ENCODE measurements at regions of chr12 and their contacts with region 1.

Region 1: DNA sequence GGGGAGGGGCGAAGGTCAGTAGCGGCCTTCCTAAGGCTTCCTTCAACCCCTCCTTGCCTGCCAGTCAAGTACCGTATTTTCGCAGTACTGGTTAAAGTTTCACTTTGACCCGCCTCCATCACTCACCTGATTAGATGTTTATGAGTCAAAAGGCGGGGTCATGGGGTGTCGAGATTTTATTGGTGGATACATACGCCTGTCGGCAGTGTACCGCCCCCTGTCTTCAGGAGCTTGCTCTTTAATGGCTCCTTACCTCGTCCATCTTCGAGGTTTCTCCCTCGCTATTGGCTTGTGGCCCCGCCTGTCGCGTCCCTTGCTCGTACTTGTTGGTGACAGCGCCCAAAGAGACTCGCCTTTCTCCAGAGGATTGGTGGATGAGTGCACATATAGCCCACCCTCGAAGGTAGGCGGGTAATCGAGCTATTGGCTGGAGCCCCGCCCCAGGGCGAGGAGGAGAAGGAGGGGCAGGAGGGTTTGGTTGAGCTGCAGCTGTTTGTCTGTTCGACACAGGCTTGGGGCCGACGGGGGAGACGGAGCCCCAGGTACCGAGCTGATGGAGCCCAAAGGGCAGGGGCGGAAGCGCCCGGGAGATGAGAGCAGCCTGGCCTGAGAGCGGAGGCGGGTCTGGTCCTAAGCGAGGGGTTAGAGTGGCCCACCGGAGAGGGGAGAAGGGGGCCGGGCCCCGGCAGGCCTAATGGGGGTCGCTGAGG is at the start of gene RAB5B:
- DNase-seq: peak; percentile 81 to 100 (median 98)
- ATAC-seq: peak; percentile 92
- H3K4me3 ChIP-seq: peak within 1 kb of the TSS; percentile 84
- H3K4me3 Mint-ChIP-seq: no peak within 1 kb of the TSS
- H3K27ac ChIP-seq: peak within 1 kb of the TSS; percentile 88
- H3K27ac Mint-ChIP-seq: no peak within 1 kb of the TSS
- H3K4me1 ChIP-seq: peaks cover 8 to 19% of the 10 kb centered on the region in 2 donors
- H3K4me1 Mint-ChIP-seq: peaks cover 18 to 31% (median 26%) of the 10 kb centered on the region in 7 donors
- H3K27me3 ChIP-seq: no peaks in the 10 kb centered on the region
- H3K27me3 Mint-ChIP-seq: no peaks in the 10 kb centered on the region
- total RNA-seq, gene RAB5B: 45.2 to 109 (median 62.7) TPM

Region 2: GRCh38 chr12:55940065-55940732 is 33.6 kb before region 1 on chr12:
- CTCF ChIA-PET with region 1: interaction called, 7 read pairs
- POLR2A ChIA-PET with region 1: interaction called, 20 read pairs
- intact Hi-C with region 1: no loop called
- DNase-seq: peak; percentile 62 to 88 (median 82)
- ATAC-seq: peak; percentile 98
- H3K4me3 ChIP-seq: no peak overlapping the region
- H3K4me3 Mint-ChIP-seq: peak overlapping the region; percentile 57 to 99 (median 72)
- H3K27ac ChIP-seq: peak overlapping the region; percentile 64
- H3K27ac Mint-ChIP-seq: peak overlapping the region; percentile 55 to 100 (median 97)
- H3K4me1 ChIP-seq: peaks cover 16 to 63% of the 10 kb centered on the region in 2 donors
- H3K4me1 Mint-ChIP-seq: peaks cover 65 to 98% (median 93%) of the 10 kb centered on the region in 7 donors
- H3K27me3 ChIP-seq: no peaks in the 10 kb centered on the region
- H3K27me3 Mint-ChIP-seq: no peaks in the 10 kb centered on the region

Region 3: DNA sequence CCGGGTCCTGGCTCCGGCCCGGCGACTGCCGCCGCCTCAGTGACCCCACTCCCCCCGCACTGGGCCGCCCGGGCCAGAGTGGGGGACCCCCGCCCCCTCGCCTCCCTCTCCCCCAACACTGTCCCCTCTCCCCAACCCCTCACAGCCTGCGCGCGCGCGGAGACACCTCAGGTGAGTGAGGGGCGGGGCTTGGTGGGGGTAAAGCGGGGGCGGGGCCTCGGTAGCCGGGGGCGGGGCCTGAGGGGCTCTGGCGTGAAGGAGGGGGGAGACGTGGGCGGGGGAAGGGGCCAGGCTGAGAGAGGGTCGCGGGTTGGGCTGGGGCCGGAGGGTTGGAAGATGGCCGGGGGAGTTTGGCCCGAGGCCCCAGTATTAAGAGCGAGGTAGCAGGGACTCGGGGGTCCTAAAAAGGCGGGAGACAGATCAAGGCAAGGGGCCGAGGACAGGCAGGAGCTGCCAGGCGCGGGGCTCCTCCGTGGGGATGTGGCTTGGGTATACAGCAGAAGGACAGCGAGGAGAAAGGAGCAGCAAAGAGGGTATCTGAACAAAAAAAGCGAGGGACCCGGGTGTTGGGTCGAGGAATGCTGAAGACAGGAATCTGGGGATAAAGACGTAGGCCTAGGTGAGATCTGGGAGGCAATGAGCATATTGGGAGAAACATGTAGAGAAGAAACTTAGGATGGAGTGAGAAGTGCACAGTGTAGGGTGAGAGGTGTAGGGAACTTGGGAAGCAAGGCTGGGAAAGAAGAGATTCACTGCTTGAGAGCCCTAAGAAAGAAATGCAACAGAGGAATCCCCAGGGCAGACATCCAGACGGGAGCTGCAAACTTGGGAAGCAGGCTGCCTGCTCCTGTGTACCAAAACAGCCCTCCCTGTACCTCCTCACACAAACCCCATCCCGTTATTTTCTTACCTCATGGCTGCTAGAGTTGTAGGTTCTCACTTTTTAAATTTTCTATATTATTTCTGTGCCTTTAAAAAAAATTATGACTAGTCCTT is 34.1 kb after region 1 on chr12:
- CTCF ChIA-PET with region 1: no interaction called
- POLR2A ChIA-PET with region 1: interaction called, 5 read pairs
- intact Hi-C with region 1: loop called in 1 of 2 experiments (anchors 1 kb)
- DNase-seq: peak; percentile 38 to 72 (median 63)
- ATAC-seq: peak; percentile 91
- H3K4me3 ChIP-seq: peak overlapping the region; percentile 57
- H3K4me3 Mint-ChIP-seq: peak overlapping the region; percentile 80 to 94 (median 88)
- H3K27ac ChIP-seq: peak overlapping the region; percentile 69
- H3K27ac Mint-ChIP-seq: peak overlapping the region; percentile 20 to 92 (median 84)
- H3K4me1 ChIP-seq: peaks cover 10% of the 10 kb centered on the region in 2 donors
- H3K4me1 Mint-ChIP-seq: peaks cover 16 to 35% (median 29%) of the 10 kb centered on the region in 7 donors
- H3K27me3 ChIP-seq: no peaks in the 10 kb centered on the region
- H3K27me3 Mint-ChIP-seq: no peaks in the 10 kb centered on the region

Region 4: DNA sequence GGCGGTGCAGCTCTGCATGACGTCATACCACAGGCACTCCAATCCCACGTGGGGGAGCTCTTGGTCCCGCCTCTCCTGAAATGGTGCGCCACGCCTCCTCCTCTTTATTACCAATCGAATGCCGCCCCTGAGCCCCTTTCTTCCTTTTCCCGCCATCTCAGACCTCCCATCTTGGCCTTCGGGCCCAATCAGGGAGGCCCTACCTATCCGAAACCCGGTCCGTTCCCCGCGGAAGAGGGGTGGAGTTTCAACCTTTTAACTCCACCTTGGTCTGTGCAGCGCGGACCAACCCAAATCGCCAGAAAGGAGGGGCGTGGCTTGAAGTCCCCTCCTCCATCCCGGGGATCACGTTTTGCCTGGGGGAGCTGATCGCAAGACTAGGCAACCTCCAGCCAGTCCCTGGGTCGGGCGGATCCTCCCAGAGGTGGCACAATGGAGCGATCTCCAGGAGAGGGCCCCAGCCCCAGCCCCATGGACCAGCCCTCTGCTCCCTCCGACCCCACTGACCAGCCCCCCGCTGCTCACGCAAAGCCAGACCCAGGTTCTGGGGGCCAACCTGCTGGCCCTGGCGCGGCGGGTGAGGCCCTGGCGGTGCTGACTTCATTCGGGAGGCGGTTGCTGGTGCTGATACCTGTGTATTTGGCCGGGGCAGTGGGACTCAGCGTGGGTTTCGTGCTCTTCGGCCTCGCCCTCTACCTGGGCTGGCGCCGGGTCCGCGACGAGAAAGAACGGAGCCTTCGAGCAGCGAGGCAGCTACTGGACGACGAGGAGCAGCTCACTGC is 154.3 kb after region 1 on chr12 and contains the start of gene ESYT1:
- CTCF ChIA-PET with region 1: no interaction called
- POLR2A ChIA-PET with region 1: interaction called, 5 read pairs
- intact Hi-C with region 1: loop called in 1 of 2 experiments (anchors 1 kb)
- DNase-seq: peak; percentile 75 to 100 (median 98)
- ATAC-seq: peak; percentile 94
- H3K4me3 ChIP-seq: peak within 1 kb of the TSS; percentile 77
- H3K4me3 Mint-ChIP-seq: peak within 1 kb of the TSS; percentile 95 to 100 (median 98)
- H3K27ac ChIP-seq: peak within 1 kb of the TSS; percentile 84
- H3K27ac Mint-ChIP-seq: peak within 1 kb of the TSS; percentile 86 to 99 (median 91)
- H3K4me1 ChIP-seq: peaks cover 39 to 54% of the 10 kb centered on the region in 2 donors
- H3K4me1 Mint-ChIP-seq: peaks cover 40 to 76% (median 65%) of the 10 kb centered on the region in 7 donors
- H3K27me3 ChIP-seq: no peaks in the 10 kb centered on the region
- H3K27me3 Mint-ChIP-seq: no peaks in the 10 kb centered on the region
- total RNA-seq, gene ESYT1: 121 to 300 (median 221) TPM

Region 5: DNA sequence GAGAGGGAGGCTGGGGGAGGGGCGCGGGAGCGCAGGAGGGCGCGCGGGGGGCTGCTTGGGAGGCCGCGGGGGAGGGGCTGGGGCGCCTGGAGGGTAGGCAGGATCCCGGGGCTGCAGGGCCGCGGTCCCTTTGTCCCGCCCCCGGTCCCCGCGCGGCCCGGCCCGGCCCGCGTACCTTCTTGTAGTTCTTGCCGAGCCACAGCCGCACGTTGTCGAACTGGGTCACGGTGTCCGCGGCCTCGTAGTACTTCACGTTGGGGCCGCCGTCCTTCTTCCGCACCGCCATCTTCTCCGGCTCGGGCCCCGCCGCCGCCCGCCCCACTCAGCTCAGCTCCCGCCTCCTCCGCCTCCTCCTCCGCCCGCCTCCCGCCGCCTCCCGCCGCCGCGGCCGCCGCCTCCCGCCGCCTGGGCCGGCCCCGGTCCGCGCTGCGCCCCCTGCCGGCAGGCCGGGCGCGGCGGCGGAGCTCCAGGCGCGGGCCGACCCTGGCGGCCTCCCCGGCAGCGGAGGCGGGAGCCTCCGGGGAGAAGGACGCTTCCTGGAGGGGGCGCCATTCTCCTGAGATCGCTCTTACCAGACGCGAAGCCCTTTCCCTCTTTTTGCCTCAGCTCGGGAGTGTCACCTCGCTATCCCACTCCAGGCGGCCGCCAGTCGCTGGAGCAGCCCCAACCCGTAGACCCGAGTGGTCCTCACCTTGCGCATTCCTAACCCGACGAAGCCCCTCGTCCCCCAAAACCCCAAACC is 215.6 kb after region 1 on chr12 and contains the start of gene SMARCC2:
- CTCF ChIA-PET with region 1: no interaction called
- POLR2A ChIA-PET with region 1: no interaction called
- intact Hi-C with region 1: loop called in 1 of 2 experiments (anchors 10 kb)
- DNase-seq: peak; percentile 78 to 93 (median 82)
- ATAC-seq: peak; percentile 93
- H3K4me3 ChIP-seq: peak within 1 kb of the TSS; percentile 91
- H3K4me3 Mint-ChIP-seq: peak within 1 kb of the TSS; percentile 76 to 98 (median 95)
- H3K27ac ChIP-seq: peak within 1 kb of the TSS; percentile 92
- H3K27ac Mint-ChIP-seq: peak within 1 kb of the TSS; percentile 93 to 99 (median 98)
- H3K4me1 ChIP-seq: peaks cover 9 to 19% of the 10 kb centered on the region in 2 donors
- H3K4me1 Mint-ChIP-seq: peaks cover 37 to 55% (median 49%) of the 10 kb centered on the region in 7 donors
- H3K27me3 ChIP-seq: no peaks in the 10 kb centered on the region
- H3K27me3 Mint-ChIP-seq: peaks cover 0 to 4% (median 0%) of the 10 kb centered on the region in 5 donors
- total RNA-seq, gene SMARCC2: 118 to 187 (median 149) TPM

Region 6: GRCh38 chr12:56243731-56244181 is 270.0 kb after region 1 on chr12:
- CTCF ChIA-PET with region 1: no interaction called
- POLR2A ChIA-PET with region 1: no interaction called
- intact Hi-C with region 1: no loop called
- DNase-seq: no peak
- ATAC-seq: no peak
- H3K4me3 ChIP-seq: no peak overlapping the region
- H3K4me3 Mint-ChIP-seq: no peak overlapping the region
- H3K27ac ChIP-seq: no peak overlapping the region
- H3K27ac Mint-ChIP-seq: no peak overlapping the region
- H3K4me1 ChIP-seq: no peaks in the 10 kb centered on the region
- H3K4me1 Mint-ChIP-seq: peaks cover 0 to 4% (median 0%) of the 10 kb centered on the region in 7 donors
- H3K27me3 ChIP-seq: no peaks in the 10 kb centered on the region
- H3K27me3 Mint-ChIP-seq: no peaks in the 10 kb centered on the region

Region 7: GRCh38 chr12:56315622-56316473 is 342.1 kb after region 1 on chr12 and contains the start of gene CNPY2:
- CTCF ChIA-PET with region 1: no interaction called
- POLR2A ChIA-PET with region 1: interaction called, 4 read pairs
- intact Hi-C with region 1: loop called in 1 of 2 experiments (anchors 1 kb)
- DNase-seq: peak; percentile 83 to 94 (median 92)
- ATAC-seq: peak; percentile 93
- H3K4me3 ChIP-seq: peak within 1 kb of the TSS; percentile 100
- H3K4me3 Mint-ChIP-seq: peak within 1 kb of the TSS; percentile 96 to 99 (median 98)
- H3K27ac ChIP-seq: peak within 1 kb of the TSS; percentile 97
- H3K27ac Mint-ChIP-seq: peak within 1 kb of the TSS; percentile 93 to 99 (median 99)
- H3K4me1 ChIP-seq: peaks cover 13 to 16% of the 10 kb centered on the region in 2 donors
- H3K4me1 Mint-ChIP-seq: peaks cover 5 to 23% (median 13%) of the 10 kb centered on the region in 7 donors
- H3K27me3 ChIP-seq: no peaks in the 10 kb centered on the region
- H3K27me3 Mint-ChIP-seq: no peaks in the 10 kb centered on the region
- total RNA-seq, gene CNPY2: 48.4 to 134 (median 87.6) TPM